ENCODE measurements at regions of chr12 and their contacts with region 1.

Region 1: DNA sequence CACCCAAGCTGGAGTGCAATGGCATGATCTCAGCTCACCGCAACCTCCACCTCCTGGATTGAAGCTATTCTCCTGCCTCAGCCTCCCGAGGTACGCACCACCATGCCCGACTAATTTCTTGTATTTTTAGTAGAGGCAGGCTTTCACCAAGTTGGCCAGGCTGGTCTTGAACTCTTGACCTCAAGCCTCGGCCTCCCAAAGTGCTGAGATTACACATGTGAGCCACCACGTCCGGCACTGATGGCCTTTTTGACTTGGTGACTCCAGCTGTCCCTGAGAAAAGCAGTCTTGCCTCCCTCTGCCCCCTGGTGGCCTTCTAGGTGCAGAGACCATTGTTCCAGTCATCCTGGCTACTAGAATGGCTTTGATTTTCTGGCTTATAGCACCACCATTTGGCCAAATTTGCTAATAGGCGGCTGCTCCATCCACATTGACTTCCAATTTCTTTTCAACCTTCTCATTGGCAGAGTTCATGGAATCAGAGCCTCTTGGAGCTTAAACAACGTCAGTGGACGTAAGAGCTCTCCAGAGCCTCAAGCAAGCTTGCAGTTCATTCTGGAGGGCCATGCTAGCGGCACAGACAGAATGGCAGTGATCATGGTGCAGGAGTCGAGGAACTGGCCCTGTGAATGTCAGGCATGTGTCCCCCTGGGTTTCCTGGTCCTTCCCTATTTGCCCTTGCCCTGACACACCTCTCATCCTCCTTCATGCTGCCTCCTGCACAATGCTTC is 25.4 kb upstream of the EIF4B start:
- DNase-seq: peak; percentile 89
- H3K4me3 Mint-ChIP-seq: no peak overlapping the region
- H3K27ac Mint-ChIP-seq: no peak overlapping the region
- H3K4me1 Mint-ChIP-seq: no peaks in the 10 kb centered on the region
- H3K27me3 Mint-ChIP-seq: peaks cover 48% of the 10 kb centered on the region

Region 2: GRCh38 chr12:52870351-52871290 is 110.2 kb before region 1 on chr12:
- CTCF ChIA-PET with region 1: interaction called, 427 read pairs
- DNase-seq: peak; percentile 83
- H3K4me3 Mint-ChIP-seq: no peak overlapping the region
- H3K27ac Mint-ChIP-seq: no peak overlapping the region
- H3K4me1 Mint-ChIP-seq: peaks cover 36% of the 10 kb centered on the region
- H3K27me3 Mint-ChIP-seq: peaks cover 44% of the 10 kb centered on the region

Region 3: DNA sequence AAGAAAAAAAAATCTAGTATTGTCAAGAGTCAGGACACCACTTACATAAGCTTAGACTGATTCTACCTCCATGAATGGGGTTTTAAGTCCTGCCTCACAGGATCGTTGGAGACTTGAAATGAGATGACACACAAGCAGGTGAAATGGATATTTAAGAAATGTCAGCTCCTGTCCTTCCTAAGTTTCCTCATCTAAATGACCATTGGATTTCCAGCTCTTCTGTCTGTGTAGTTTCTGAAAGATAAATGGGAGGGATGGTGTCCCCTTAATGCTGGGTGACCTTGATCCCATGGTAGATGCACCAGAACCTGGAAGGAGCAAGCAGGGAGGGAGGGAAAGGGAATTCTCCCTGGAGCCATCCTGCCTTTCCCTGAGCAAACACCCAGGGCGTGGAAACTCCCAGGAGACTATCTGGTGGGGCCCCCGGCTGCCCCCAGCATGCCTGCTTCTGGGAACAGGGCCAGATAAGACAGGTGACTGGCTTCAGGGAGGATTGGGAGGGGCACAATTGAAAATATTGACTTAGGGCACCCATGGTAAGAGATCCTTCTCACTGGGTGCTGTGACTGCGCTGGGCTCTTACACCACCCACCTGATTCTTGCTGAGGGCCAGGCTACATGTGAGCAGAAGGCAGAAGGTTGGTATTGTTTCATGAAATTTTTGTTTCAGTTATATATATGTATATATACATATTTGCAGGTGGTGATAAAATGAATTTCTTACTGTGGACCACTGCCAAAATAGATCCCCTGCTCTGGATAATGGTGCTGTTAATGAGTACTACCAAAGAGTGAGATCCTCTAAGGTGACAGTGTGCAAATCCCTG is 85.6 kb before region 1 on chr12:
- CTCF ChIA-PET with region 1: interaction called, 36 read pairs
- DNase-seq: no peak
- H3K4me3 Mint-ChIP-seq: no peak overlapping the region
- H3K27ac Mint-ChIP-seq: no peak overlapping the region
- H3K4me1 Mint-ChIP-seq: no peaks in the 10 kb centered on the region
- H3K27me3 Mint-ChIP-seq: peaks cover 10% of the 10 kb centered on the region

Region 4: DNA sequence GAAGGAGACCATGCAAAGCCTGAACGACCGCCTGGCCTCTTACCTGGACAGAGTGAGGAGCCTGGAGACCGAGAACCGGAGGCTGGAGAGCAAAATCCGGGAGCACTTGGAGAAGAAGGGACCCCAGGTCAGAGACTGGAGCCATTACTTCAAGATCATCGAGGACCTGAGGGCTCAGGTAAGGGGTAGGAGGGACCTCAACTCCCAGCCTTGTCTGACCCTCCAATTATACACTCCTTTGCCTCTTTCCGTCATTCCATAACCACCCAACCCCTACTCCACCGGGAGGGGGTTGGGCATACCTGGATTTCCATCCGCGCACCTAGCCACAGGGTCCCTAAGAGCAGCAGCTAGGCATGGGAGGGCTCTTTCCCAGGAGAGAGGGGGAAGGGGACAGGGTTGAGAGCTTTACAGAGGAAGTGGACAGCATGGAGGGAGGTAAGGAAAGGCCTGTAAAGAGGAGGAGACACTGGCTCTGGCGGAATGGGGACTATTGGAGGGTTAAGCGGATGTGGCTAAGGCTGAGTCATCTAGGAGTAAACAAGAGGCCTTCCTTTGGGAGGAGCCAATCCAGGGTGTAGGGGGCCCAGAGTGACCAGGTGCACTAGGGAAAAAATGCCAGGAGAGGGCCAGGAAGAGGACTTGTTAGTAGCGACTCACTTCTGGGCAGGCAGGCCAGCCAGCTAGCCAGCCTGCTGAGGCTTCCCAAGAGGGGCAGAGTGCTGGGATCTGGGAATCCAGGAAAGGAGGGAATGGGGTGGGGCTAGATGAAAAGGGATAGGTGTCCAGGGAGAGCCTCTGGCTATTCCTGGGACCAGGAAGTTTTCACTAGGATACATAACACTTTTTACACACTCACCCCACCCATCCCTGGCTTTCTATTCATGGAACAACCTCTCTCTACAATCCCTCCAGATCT is 31.2 kb before region 1 on chr12:
- CTCF ChIA-PET with region 1: interaction called, 11 read pairs
- DNase-seq: no peak
- H3K4me3 Mint-ChIP-seq: peak overlapping the region; percentile 68
- H3K27ac Mint-ChIP-seq: no peak overlapping the region
- H3K4me1 Mint-ChIP-seq: peaks cover 8% of the 10 kb centered on the region
- H3K27me3 Mint-ChIP-seq: peaks cover 42% of the 10 kb centered on the region

Region 5: GRCh38 chr12:52992699-52993557 is 12.1 kb after region 1 on chr12:
- CTCF ChIA-PET with region 1: interaction called, 10 read pairs
- DNase-seq: no peak
- H3K4me3 Mint-ChIP-seq: no peak overlapping the region
- H3K27ac Mint-ChIP-seq: no peak overlapping the region
- H3K4me1 Mint-ChIP-seq: no peaks in the 10 kb centered on the region
- H3K27me3 Mint-ChIP-seq: peaks cover 13% of the 10 kb centered on the region

Region 6: DNA sequence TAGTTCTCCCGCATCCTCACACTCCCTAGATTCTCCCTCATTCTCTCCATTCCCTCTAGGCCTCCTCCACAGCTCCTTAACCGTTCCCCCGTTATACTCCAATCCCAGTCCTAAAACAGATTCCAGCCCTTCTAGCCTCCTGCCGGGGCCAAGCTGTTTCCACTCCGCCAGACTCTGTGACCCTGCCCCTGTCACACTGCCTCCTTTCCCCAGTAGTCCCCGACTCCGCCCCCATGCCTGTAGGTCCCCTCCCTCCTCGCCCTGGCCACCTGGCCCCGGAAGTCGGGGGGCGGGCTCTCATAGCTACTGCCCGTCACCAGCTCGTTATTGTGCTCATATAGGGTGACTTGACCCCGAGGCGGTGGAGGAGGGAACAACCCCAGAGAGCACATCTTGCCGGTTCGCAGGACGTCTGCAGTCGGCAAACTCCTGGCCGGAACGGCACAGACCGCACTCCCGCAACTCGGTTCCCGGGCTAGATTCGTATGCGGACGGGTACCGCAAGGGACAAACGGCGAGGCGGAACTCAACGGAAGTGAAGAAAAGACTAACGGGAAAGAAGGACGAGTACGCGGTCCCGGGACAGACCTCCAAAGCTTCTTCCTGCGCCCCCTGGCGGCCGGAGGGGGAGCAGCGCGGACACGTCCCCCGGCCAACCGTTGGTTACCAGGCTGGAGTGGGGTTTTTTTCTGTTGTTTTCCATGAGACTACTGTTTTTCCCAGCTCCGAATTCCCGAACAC is 340.4 kb after region 1 on chr12 and contains the start of gene AAAS:
- CTCF ChIA-PET with region 1: no interaction called
- DNase-seq: peak; percentile 98
- H3K4me3 Mint-ChIP-seq: peak within 1 kb of the TSS; percentile 89
- H3K27ac Mint-ChIP-seq: peak within 1 kb of the TSS; percentile 92
- H3K4me1 Mint-ChIP-seq: peaks cover 51% of the 10 kb centered on the region
- H3K27me3 Mint-ChIP-seq: peaks cover 6% of the 10 kb centered on the region

Measured in activated naive CD4-positive, alpha-beta T cell treated with anti-CD3 and anti-CD28 coated beads, Interleukin-2, amount 10 ng/mL, durations not matched to agents 7 days and 5 days (primary cell).